ENCODE measurements at regions of chr10 and their contacts with region 1.

Region 1: DNA sequence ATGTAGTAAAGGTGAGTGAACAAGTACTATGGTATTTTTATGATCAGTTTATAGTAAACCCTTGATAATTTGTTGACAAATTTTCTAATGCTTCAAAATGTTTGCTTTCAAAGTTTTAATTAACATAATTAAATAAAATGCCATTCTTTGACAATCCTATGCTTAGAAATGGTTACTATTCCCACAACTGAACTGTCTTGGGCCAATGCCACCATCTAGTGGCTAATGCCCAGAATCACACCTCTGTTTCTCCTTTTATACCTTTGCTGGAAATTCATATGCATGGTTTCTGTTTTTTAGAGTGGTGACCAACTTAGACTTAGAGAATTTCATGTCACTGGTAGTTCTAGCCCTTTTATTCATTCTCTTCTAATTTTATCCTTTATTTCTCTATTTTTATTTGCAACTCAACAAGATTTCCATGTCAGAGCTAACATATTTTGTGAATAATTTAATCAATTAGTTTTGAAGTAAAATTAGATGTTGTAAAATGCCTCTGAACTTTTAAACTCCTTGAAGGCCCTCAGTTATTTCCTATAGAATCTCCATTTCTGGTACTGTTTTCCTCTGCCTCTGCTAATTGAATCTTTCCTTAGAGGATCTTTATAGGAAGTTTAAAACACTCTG is 31.1 kb downstream of the PCGF5 start:
- DNase-seq: peak; percentile 85
- H3K4me3 Mint-ChIP-seq: no peak overlapping the region
- H3K27ac Mint-ChIP-seq: no peak overlapping the region
- H3K4me1 Mint-ChIP-seq: peaks cover 3% of the 10 kb centered on the region
- H3K27me3 Mint-ChIP-seq: no peaks in the 10 kb centered on the region

Region 2: GRCh38 chr10:90879062-90879461 is 372.5 kb before region 1 on chr10:
- intact Hi-C with region 1: loop called (anchors 2 kb)
- DNase-seq: no peak
- H3K4me3 Mint-ChIP-seq: no peak overlapping the region
- H3K27ac Mint-ChIP-seq: no peak overlapping the region
- H3K4me1 Mint-ChIP-seq: peaks cover 9% of the 10 kb centered on the region
- H3K27me3 Mint-ChIP-seq: no peaks in the 10 kb centered on the region

Region 3: GRCh38 chr10:90912174-90912573 is 339.4 kb before region 1 on chr10:
- intact Hi-C with region 1: loop called (anchors 2 kb)
- DNase-seq: no peak
- H3K4me3 Mint-ChIP-seq: no peak overlapping the region
- H3K27ac Mint-ChIP-seq: no peak overlapping the region
- H3K4me1 Mint-ChIP-seq: peaks cover 2% of the 10 kb centered on the region
- H3K27me3 Mint-ChIP-seq: peaks cover 7% of the 10 kb centered on the region

Region 4: DNA sequence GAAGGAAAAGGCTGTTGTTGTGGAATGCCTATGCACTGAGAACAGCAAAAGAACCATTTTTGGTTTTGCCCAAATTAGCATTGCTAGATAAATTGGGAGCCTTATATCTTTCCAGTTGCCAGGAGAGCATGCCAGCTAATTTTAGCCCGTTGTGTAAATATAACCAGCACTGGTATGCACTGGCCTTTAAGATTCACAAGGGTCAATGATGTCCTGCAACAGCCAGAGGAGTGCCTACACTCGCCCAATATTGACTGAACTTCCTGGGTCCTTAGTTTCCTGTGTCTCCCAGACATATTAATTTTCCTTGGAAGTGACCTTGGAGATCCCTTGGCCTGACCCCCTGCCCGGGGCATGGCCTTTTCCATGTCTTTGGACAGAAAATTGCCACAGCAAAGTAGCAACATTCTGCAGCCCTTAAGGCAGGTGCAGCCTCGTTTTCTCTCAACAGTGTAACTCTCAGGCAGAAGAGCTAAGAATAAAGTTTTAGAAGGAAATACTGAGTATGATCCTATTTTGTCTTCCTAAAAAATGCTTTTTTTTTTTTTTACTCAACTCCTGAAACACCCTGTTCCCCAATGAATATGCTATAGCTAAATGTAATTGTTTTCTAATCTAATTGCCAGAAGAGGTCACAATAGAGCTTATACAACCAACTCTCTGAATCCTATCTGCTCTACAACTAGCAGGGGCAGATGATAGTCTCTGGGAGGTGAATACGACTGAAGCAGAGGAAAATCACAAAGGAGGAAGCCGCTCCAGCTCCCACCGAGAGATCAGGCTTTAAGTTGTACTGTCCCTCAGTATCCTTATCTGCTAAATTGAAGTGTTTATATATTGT is 163.0 kb before region 1 on chr10:
- intact Hi-C with region 1: loop called (anchors 1 kb)
- DNase-seq: no peak
- H3K4me3 Mint-ChIP-seq: no peak overlapping the region
- H3K27ac Mint-ChIP-seq: no peak overlapping the region
- H3K4me1 Mint-ChIP-seq: no peaks in the 10 kb centered on the region
- H3K27me3 Mint-ChIP-seq: peaks cover 19% of the 10 kb centered on the region

Region 5: GRCh38 chr10:91198781-91199180 is 52.8 kb before region 1 on chr10:
- intact Hi-C with region 1: loop called (anchors 2 kb)
- DNase-seq: peak; percentile 84
- H3K4me3 Mint-ChIP-seq: peak overlapping the region; percentile 67
- H3K27ac Mint-ChIP-seq: peak overlapping the region; percentile 78
- H3K4me1 Mint-ChIP-seq: peaks cover 68% of the 10 kb centered on the region
- H3K27me3 Mint-ChIP-seq: no peaks in the 10 kb centered on the region

Region 6: GRCh38 chr10:91220194-91220953 is 31.2 kb before region 1 on chr10 and contains the start of gene PCGF5:
- intact Hi-C with region 1: loop called (anchors 2 kb)
- DNase-seq: peak; percentile 97
- H3K4me3 Mint-ChIP-seq: peak within 1 kb of the TSS; percentile 96
- H3K27ac Mint-ChIP-seq: peak within 1 kb of the TSS; percentile 87
- H3K4me1 Mint-ChIP-seq: peaks cover 46% of the 10 kb centered on the region
- H3K27me3 Mint-ChIP-seq: no peaks in the 10 kb centered on the region
- total RNA-seq, gene PCGF5: 42.1 and 45.4 TPM in 2 replicates

Region 7: DNA sequence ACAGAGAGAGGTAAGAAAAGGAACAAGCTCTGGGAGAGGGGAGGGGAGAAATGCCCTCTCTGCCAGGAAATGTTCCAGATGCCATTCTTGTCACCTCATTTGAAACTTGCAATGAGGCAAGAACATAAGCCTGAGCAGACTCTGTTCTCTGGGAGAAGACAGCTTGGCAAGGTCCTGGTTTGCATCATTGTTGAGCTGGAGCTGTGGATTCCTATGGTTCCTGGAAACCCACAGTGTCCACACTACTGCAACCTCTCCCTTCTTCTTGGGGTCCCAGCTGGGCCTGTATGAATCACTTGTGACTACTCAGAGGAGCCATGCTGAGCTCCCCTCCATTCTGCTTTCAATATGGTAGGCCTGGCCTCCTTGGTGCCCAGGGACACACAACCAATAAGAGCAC is 97.8 kb after region 1 on chr10:
- intact Hi-C with region 1: no loop called
- DNase-seq: no peak
- H3K4me3 Mint-ChIP-seq: no peak overlapping the region
- H3K27ac Mint-ChIP-seq: no peak overlapping the region
- H3K4me1 Mint-ChIP-seq: peaks cover 3% of the 10 kb centered on the region
- H3K27me3 Mint-ChIP-seq: peaks cover under 1% of the 10 kb centered on the region

Measured in activated CD4-positive, alpha-beta T cell treated with anti-CD3 and anti-CD28 coated beads, Interleukin-2, amount 10 ng/mL, durations not matched to agents 24 days and 14 days (primary cell).